B cell (primary cell): ENCODE measurements at regions of chr12 and their contacts with region 1.

Region 1: GRCh38 chr12:12736759-12737676 is 19.9 kb downstream of the CDKN1B start:
- DNase-seq: peak; percentile 72
- ATAC-seq: peak; percentile 87
- H3K4me3 ChIP-seq: peak overlapping the region in 3 of 5 experiments; percentile 7 to 49 (median 44)
- H3K4me3 Mint-ChIP-seq: peak overlapping the region; percentile 66
- H3K27ac ChIP-seq: peak overlapping the region; percentile 32 to 64
- H3K27ac Mint-ChIP-seq: peak overlapping the region; percentile 85
- H3K4me1 ChIP-seq: peaks cover 6 to 14% of the 10 kb centered on the region in 2 donors
- H3K4me1 Mint-ChIP-seq: peaks cover 14% of the 10 kb centered on the region
- H3K27me3 ChIP-seq: no peaks in the 10 kb centered on the region
- H3K27me3 Mint-ChIP-seq: no peaks in the 10 kb centered on the region
- CTCF ChIP-seq: peak; percentile 81

Region 2: DNA sequence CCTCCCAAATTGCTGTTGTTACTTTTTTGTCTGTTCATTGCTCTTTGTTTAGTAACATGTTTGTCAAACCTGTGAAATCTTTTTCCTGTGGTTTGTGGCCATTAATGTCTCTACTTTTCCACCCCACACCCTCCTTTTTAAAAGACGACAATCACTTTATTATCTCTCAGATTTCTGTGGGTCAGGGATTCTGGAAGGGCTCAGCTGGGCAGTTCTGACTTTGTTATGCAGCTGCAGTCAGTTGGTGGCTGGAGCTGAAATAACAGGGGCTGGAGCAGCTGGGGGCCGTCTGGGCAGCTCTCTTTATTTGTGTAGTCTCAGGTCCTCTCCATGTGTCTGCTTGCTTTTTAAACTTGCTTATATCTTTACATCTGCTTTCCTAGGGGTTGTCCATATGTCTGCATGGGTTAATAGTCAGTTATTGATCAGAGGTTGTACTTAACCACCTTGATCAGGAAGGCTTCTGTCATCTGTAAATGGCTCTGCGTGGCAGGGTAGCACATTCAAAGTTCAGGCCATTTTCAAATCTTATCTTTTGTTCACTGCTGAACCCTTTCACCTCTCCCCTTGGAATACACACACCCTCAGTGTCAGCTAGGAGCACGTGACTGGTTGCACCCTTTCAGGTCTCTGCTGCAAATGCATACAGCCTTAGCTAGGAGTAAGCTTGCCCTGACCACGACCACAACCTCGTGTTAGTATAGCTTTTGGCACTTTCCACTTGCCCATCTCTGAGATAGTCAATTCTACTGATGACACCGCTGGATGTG is 352.3 kb before region 1 on chr12:
- CTCF ChIA-PET with region 1: interaction called, 168 read pairs
- POLR2A ChIA-PET with region 1: no interaction called
- intact Hi-C with region 1: no loop called
- DNase-seq: no peak
- ATAC-seq: no peak
- H3K4me3 ChIP-seq: no peak overlapping the region
- H3K4me3 Mint-ChIP-seq: no peak overlapping the region
- H3K27ac ChIP-seq: no peak overlapping the region
- H3K27ac Mint-ChIP-seq: no peak overlapping the region
- H3K4me1 ChIP-seq: peaks cover 7 to 8% of the 10 kb centered on the region in 2 donors
- H3K4me1 Mint-ChIP-seq: peaks cover 15% of the 10 kb centered on the region
- H3K27me3 ChIP-seq: no peaks in the 10 kb centered on the region
- H3K27me3 Mint-ChIP-seq: no peaks in the 10 kb centered on the region
- CTCF ChIP-seq: no peak

Region 3: DNA sequence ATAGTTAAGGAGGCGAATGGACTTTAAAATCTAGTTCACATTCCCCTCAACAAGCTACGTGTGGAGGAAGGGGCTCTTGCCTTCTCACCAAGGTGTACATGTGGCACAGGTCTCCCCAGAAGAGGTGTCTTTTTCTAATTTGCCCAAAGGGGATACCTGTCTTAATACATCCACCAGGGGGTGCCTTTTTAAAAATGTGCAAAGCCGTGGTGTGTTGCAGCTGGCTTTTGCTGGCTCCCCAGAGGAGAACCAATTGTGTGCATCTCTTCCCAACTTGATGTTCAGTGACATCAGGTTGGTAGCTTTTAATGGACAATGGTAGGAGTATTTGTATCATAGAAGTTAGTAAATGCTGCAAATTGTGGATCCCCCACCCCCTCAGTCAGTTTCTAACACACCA is 91.5 kb before region 1 on chr12:
- CTCF ChIA-PET with region 1: interaction called, 91 read pairs
- POLR2A ChIA-PET with region 1: interaction called, 4 read pairs
- intact Hi-C with region 1: loop called (anchors 1 kb)
- DNase-seq: peak; percentile 75
- ATAC-seq: peak; percentile 83
- H3K4me3 ChIP-seq: no peak overlapping the region
- H3K4me3 Mint-ChIP-seq: no peak overlapping the region
- H3K27ac ChIP-seq: no peak overlapping the region
- H3K27ac Mint-ChIP-seq: no peak overlapping the region
- H3K4me1 ChIP-seq: no peaks in the 10 kb centered on the region
- H3K4me1 Mint-ChIP-seq: peaks cover 4% of the 10 kb centered on the region
- H3K27me3 ChIP-seq: no peaks in the 10 kb centered on the region
- H3K27me3 Mint-ChIP-seq: no peaks in the 10 kb centered on the region
- CTCF ChIP-seq: peak; percentile 71

Region 4: DNA sequence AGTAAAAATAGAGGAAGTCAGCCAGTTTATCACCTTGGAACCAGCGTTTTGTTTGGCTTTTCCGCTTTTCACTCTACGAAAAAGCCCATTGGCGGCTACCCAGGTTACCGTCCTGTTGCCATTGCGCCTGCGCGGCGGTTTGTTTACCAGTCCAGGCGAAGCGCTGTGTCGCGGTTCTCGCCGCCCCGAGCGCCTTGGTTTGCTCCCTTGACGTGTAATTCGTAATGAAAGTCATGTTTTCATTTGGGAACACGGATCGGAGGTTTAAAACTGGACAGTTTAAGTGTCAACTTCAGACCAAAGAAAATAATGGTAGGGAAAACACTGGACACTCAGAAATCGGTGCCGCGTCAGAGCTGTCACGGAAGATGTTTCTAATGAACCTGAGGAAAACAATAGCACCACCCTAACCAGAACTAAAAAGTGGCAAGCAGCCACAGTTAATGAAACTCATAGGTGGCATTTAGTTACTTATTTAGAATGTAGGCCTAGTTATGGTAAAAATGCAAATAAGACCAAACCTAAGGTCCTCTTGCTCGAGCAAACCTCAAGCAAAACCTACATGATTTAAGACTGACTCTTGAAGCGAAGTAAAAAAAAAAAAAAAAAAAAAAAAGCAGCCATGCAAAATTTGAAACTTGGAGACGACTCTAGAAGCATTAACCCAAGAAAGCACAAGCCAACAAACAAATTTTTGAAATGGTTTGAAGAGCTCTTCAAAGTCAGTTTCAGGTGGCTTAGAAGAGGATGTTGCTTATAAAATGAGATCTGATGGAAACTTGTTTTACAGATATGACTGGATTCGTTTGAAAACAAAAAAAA is 40.2 kb before region 1 on chr12:
- CTCF ChIA-PET with region 1: interaction called, 34 read pairs
- POLR2A ChIA-PET with region 1: interaction called, 6 read pairs
- intact Hi-C with region 1: no loop called
- DNase-seq: peak; percentile 95
- ATAC-seq: peak; percentile 86
- H3K4me3 ChIP-seq: peak overlapping the region; percentile 66 to 77 (median 68)
- H3K4me3 Mint-ChIP-seq: peak overlapping the region; percentile 99
- H3K27ac ChIP-seq: peak overlapping the region; percentile 97 to 98
- H3K27ac Mint-ChIP-seq: peak overlapping the region; percentile 100
- H3K4me1 ChIP-seq: peaks cover 15 to 23% of the 10 kb centered on the region in 2 donors
- H3K4me1 Mint-ChIP-seq: peaks cover 32% of the 10 kb centered on the region
- H3K27me3 ChIP-seq: no peaks in the 10 kb centered on the region
- H3K27me3 Mint-ChIP-seq: no peaks in the 10 kb centered on the region
- CTCF ChIP-seq: no peak

Region 5: GRCh38 chr12:12724661-12725545 is 12.1 kb before region 1 on chr12:
- CTCF ChIA-PET with region 1: interaction called, 51 read pairs
- POLR2A ChIA-PET with region 1: interaction called, 57 read pairs
- intact Hi-C with region 1: loop called (anchors 1 kb)
- DNase-seq: no peak
- ATAC-seq: peak; percentile 65
- H3K4me3 ChIP-seq: peak overlapping the region; percentile 74 to 88 (median 78)
- H3K4me3 Mint-ChIP-seq: peak overlapping the region; percentile 87
- H3K27ac ChIP-seq: peak overlapping the region; percentile 94 to 97
- H3K27ac Mint-ChIP-seq: peak overlapping the region; percentile 94
- H3K4me1 ChIP-seq: peaks cover 22 to 30% of the 10 kb centered on the region in 2 donors
- H3K4me1 Mint-ChIP-seq: peaks cover 52% of the 10 kb centered on the region
- H3K27me3 ChIP-seq: no peaks in the 10 kb centered on the region
- H3K27me3 Mint-ChIP-seq: no peaks in the 10 kb centered on the region
- CTCF ChIP-seq: peak; percentile 10

Region 6: DNA sequence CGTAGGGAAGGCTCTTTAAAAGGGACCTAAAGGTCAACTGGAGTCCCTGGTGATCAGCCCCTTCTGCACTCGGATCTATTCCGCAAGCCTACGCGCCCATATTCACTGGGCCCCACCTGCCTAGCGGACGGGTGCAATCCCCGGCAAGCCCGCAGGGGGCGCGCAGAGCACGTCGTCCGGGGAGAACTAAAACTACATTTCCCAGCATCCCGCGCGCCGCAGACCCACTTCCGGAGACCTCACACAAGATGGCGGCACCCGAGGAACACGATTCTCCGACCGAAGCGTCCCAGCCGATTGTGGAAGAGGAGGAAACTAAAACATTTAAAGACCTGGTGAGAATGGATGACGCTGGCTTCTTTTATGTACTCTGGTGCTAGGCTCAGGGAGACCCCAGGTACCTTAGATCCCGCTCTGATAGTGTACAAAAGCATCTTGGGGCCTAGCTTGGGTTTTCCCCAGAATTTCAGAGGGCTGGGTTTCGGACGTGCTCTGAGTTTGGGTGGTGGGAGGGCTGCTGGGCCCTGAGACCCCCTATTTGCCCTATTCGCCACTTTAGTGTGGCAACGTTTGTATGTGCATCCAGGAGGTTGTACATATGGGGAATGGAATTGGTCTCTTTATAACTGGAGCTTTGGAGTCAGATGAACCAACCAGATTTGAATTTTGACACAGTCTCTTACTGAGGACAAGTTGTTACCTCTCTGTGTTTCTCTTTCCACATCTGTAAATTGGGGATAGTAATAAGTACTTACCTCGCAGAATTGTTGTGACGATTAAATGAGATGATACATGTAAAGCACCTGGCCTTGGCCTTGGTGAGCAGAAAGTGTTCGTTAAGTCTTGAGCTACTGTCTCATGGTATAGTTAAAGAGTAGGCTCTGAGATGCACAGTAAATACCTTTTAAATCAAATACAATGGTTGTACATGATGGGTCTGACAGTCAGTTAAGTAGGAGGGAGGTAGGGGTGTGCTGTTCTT is 76.4 kb after region 1 on chr12 and contains the start of gene DDX47:
- CTCF ChIA-PET with region 1: interaction called, 11 read pairs
- POLR2A ChIA-PET with region 1: no interaction called
- intact Hi-C with region 1: no loop called
- DNase-seq: peak; percentile 96
- ATAC-seq: peak; percentile 75
- H3K4me3 ChIP-seq: peak within 1 kb of the TSS; percentile 81 to 100 (median 94)
- H3K4me3 Mint-ChIP-seq: peak within 1 kb of the TSS; percentile 91
- H3K27ac ChIP-seq: peak within 1 kb of the TSS; percentile 86 to 94
- H3K27ac Mint-ChIP-seq: peak within 1 kb of the TSS; percentile 91
- H3K4me1 ChIP-seq: peaks cover 24 to 41% of the 10 kb centered on the region in 2 donors
- H3K4me1 Mint-ChIP-seq: peaks cover 66% of the 10 kb centered on the region
- H3K27me3 ChIP-seq: no peaks in the 10 kb centered on the region
- H3K27me3 Mint-ChIP-seq: no peaks in the 10 kb centered on the region
- CTCF ChIP-seq: peak; percentile 92
- total RNA-seq, gene DDX47: 89.1 and 93.7 TPM in 2 replicates